AG04450 (cell line): ENCODE measurements at regions of chr11 and their contacts with region 1.

Region 1: DNA sequence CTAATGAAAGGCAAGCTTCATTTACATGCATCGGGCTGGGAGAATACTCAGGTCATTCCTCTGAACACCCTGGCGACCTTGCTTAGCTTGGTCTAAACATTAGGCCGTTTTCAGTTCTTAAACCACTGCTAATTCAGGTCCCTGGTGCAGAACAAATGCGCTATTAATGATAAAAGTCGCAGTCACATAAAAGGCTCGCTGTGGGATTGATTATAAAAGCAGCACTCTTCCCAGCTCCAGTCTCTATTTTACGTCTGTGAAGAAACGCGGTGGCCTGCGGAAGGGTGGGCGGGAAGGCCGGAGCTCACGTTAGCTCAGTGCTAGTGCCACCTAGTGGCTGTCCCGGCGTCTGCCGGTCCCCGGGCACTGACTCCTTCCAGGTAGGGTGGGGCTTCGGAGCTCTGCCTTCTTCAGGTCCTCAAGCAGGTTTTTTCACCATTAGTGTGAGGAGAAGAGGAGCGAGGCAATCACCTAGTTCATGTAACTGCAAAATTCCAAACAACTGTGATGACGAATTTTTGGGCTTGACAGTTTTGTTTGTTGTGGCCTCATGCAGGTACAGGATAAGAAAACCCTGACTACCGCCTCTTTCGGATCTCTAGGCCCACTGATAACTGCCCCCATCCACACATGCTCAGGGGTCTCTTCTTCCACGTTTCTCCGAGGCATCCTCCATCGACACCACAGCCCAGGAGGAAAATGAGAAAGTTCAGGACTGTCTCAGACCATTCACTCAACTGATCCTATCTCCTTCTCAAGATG is 66.5 kb upstream of the CLMP start:
- DNase-seq: no peak
- H3K4me3 ChIP-seq: peak overlapping the region; percentile 20
- H3K27ac ChIP-seq: no peak overlapping the region
- H3K27me3 ChIP-seq: peaks cover 9% of the 10 kb centered on the region
- CTCF ChIP-seq: peak; percentile 97

Region 2: DNA sequence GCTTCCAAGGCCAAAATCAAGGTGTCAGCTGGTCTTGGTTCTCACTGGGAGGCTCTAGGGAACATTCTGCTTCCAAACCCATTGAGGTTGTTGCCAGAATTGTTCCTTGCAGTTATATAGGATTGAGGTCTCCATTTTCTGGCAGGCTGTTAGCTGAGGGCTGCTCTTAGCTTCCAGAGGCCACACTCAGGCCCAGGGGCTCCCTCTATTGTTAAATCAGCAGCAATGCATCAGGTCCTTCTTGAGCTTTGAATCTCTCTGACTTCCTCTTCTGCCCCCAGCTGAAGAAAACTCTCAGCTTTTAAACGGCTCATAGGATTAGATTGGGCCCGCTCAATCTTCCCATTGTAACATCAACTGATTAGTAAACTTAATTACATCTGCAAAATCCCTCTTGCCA is 240.6 kb before region 1 on chr11:
- CTCF ChIA-PET with region 1: interaction called, 15 read pairs
- POLR2A ChIA-PET with region 1: no interaction called
- DNase-seq: peak; percentile 29
- H3K4me3 ChIP-seq: no peak overlapping the region
- H3K27ac ChIP-seq: no peak overlapping the region
- H3K27me3 ChIP-seq: peaks cover 25% of the 10 kb centered on the region
- CTCF ChIP-seq: peak; percentile 74

Region 3: GRCh38 chr11:123062158-123062891 is 199.2 kb before region 1 on chr11:
- CTCF ChIA-PET with region 1: interaction called, 14 read pairs
- POLR2A ChIA-PET with region 1: interaction called, 8 read pairs
- DNase-seq: peak; percentile 100
- H3K4me3 ChIP-seq: peak overlapping the region; percentile 95
- H3K27ac ChIP-seq: peak overlapping the region; percentile 99
- H3K27me3 ChIP-seq: no peaks in the 10 kb centered on the region
- CTCF ChIP-seq: 0 out of 2 replicates have a peak, but pooled peaks have one; percentile 13

Region 4: GRCh38 chr11:123110356-123110755 is 151.2 kb before region 1 on chr11:
- CTCF ChIA-PET with region 1: interaction called, 60 read pairs
- POLR2A ChIA-PET with region 1: interaction called, 5 read pairs
- DNase-seq: no peak
- H3K4me3 ChIP-seq: no peak overlapping the region
- H3K27ac ChIP-seq: no peak overlapping the region
- H3K27me3 ChIP-seq: no peaks in the 10 kb centered on the region
- CTCF ChIP-seq: no peak

Region 5: GRCh38 chr11:123159183-123159857 is 102.2 kb before region 1 on chr11:
- CTCF ChIA-PET with region 1: interaction called, 10 read pairs
- POLR2A ChIA-PET with region 1: no interaction called
- DNase-seq: no peak
- H3K4me3 ChIP-seq: no peak overlapping the region
- H3K27ac ChIP-seq: no peak overlapping the region
- H3K27me3 ChIP-seq: no peaks in the 10 kb centered on the region
- CTCF ChIP-seq: no peak

Region 6: DNA sequence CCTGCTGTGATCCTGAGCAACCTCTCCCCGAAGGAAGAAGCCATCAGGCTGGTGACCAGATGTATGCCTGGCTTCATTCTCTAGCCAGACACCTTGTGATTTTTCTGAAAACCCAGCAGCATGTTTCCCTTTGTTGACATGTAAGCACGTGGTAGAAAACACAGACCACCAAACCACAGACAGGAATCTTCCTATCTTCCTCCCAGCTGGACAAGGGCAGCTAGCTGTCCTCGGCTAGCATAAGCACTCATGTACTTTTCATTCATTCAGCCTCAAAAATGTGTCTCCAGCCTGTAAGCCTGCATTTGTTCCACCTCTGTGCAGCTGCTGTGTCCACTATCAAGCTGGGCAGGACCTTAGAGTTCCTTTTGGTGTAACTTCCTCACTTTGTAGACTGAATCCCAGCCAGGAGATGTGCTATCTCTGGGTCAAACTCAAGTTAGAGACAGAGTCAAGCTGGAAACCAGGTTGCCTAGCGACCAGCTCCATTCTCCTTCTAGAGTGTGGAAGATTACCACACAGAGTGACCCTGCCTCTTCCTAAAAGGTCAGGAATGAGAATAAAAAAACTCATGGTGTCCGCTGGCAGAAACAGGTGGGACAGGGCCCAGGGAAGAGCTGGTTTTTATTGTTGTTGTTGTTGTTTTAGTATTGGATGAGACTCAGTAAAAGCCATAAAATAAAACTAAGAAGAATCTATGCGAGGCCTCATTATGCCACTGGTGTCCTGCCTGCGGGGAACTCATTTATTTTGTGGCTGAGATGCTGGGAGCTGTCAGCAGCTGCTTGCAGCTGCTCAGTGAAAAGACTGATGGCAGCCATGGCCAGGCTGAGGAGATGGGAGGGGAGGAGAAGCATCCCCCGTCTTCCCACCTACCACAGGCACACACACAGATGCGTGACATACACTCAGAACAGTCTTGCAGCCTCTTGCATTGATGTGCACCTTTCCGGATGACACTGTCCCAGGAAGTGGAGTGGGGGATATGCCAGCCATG is 59.1 kb before region 1 on chr11:
- CTCF ChIA-PET with region 1: no interaction called
- POLR2A ChIA-PET with region 1: no interaction called
- DNase-seq: no peak
- H3K4me3 ChIP-seq: no peak overlapping the region
- H3K27ac ChIP-seq: peak overlapping the region; percentile 3
- H3K27me3 ChIP-seq: no peaks in the 10 kb centered on the region
- CTCF ChIP-seq: no peak

Region 7: GRCh38 chr11:123344790-123345357 is 83.3 kb after region 1 on chr11:
- CTCF ChIA-PET with region 1: no interaction called
- POLR2A ChIA-PET with region 1: no interaction called
- DNase-seq: no peak
- H3K4me3 ChIP-seq: no peak overlapping the region
- H3K27ac ChIP-seq: no peak overlapping the region
- H3K27me3 ChIP-seq: peaks cover 4% of the 10 kb centered on the region
- CTCF ChIP-seq: no peak

Region 8: GRCh38 chr11:123478352-123478987 is 216.9 kb after region 1 on chr11:
- CTCF ChIA-PET with region 1: interaction called, 23 read pairs
- POLR2A ChIA-PET with region 1: no interaction called
- DNase-seq: peak; percentile 63
- H3K4me3 ChIP-seq: no peak overlapping the region
- H3K27ac ChIP-seq: no peak overlapping the region
- H3K27me3 ChIP-seq: no peaks in the 10 kb centered on the region
- CTCF ChIP-seq: peak; percentile 74

Region 9: DNA sequence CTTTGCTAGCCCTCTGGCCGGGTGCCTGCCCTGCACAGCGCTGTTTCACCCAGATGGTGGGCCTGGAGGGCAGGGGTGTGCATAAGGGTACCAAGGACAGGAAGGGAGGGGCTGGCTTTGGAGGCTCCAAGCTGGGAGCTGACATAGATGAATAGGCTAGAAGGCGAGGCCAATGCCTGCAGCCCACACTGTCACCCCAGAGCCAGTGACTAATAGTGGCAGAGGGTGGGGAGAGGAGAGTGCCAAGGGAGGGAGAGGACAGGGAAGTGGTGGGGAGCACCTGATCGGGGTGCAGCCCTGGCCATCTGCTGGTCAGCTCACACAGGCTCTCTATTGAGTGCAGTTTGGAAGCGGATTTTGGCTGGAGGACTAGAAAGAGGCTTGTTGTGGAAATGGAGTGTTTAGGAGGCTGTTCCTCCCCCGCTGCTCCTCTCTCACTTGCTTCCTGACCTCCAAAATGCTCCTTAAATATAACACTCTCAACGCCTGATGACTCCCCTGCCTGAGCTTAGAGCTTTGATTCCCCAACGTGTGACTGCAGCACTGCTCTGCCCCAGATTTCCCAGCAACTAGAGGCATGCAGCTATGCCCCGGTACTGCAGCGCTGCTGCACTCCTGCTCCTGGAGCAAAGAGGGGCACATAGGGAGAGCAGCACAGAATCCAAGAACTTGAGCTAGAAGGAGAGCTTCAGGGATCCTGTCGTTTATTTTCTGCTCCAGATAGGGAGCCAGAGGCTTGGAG is 257.7 kb after region 1 on chr11:
- CTCF ChIA-PET with region 1: no interaction called
- POLR2A ChIA-PET with region 1: no interaction called
- DNase-seq: no peak
- H3K4me3 ChIP-seq: no peak overlapping the region
- H3K27ac ChIP-seq: no peak overlapping the region
- H3K27me3 ChIP-seq: no peaks in the 10 kb centered on the region
- CTCF ChIP-seq: no peak

Region 10: GRCh38 chr11:123815122-123815521 is 553.6 kb after region 1 on chr11:
- CTCF ChIA-PET with region 1: no interaction called
- POLR2A ChIA-PET with region 1: no interaction called
- DNase-seq: no peak
- H3K4me3 ChIP-seq: no peak overlapping the region
- H3K27ac ChIP-seq: no peak overlapping the region
- H3K27me3 ChIP-seq: no peaks in the 10 kb centered on the region
- CTCF ChIP-seq: no peak